Activated B cell treated with CpG ODN at 0.5 μM for 24 hours (primary cell): ENCODE measurements at regions of chr19 and their contacts with region 1.

Region 1: DNA sequence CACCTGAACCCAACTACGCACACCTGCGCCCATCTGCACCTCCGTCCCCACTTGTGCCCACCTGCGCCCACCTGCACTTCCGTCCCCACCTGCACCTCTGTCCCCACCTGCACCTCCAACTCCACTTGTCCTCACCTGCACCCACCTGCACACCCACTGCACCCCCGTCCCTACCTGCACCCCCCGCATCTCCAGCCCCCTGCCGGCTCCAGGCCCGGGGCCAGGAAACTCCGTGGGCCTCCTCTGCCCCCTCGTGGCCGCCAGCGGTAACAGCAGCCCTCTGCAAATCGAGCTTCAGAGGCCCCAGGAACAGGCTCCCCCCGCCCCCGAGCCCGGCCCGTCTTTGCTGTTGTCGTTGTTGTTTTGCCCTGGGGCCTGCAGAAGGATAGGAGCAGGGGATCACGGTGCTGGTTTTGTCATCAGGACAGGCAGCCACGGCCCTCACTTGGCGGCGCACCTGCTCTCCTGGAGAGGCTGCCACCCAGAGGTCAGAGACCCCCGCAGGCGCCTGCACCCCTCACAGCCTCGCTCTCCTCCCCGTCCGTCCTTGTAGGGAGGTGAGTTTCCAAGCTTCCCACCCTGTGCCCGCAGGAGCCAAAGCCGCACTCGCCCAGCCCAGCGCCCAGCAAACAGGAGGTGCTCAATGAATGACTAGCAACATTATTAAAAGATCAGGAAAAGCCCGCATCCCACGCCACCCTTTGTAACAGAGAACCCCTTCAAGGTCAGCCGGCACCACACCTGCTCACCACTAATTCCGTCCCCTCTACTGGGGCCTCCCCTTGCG is 65.4 kb downstream of the GNG7 start:
- DNase-seq: peak; percentile 74
- ATAC-seq: peak; percentile 52
- H3K4me3 Mint-ChIP-seq: peak overlapping the region; percentile 53
- H3K27ac Mint-ChIP-seq: peak overlapping the region; percentile 74
- H3K4me1 Mint-ChIP-seq: peaks cover 87% of the 10 kb centered on the region
- H3K27me3 Mint-ChIP-seq: no peaks in the 10 kb centered on the region
- CTCF ChIP-seq: peak; percentile 31

Region 2: DNA sequence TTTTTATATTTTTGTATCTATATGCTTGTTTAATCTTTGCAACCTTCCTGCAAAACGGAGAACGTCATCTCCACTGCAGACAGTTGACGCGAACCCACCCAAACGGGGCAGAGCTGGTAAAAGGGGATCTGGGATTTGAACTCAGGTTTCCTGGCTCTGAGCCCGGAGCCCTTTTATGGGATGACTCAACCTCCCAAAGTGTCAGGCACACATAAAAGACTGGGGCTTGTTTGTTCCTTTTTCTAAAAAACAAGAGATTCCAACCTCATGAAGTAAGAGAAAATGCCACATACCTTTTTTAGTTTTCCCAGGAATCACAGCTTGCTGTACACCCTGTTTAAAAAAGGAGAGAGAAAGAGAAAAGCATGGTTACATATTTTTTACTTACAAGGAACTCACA is 82.2 kb before region 1 on chr19:
- CTCF ChIA-PET with region 1: no interaction called
- POLR2A ChIA-PET with region 1: no interaction called
- intact Hi-C with region 1: no loop called
- DNase-seq: no peak
- ATAC-seq: no peak
- H3K4me3 Mint-ChIP-seq: no peak overlapping the region
- H3K27ac Mint-ChIP-seq: peak overlapping the region; percentile 35
- H3K4me1 Mint-ChIP-seq: peaks cover 31% of the 10 kb centered on the region
- H3K27me3 Mint-ChIP-seq: no peaks in the 10 kb centered on the region
- CTCF ChIP-seq: no peak

Region 3: DNA sequence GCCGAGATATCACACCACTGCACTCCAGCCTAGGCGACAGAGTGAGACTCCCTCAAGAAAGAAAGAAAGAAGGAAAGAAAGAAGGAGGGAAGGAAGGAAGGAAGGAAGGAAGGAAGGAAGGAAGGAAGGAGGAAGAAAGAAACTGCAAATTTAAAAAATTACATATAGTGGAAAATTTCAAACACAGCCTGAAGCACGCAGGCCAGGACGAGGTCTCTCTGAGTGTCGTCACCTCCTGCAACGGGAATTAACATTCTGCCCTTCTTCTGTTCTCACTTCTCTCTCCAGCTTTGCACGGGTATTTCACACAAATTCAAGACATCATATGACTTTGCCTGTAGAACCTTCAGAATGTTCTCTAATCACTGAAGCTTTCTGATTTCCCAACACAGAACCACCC is 42.8 kb before region 1 on chr19:
- CTCF ChIA-PET with region 1: interaction called, 10 read pairs
- POLR2A ChIA-PET with region 1: interaction called, 4 read pairs
- intact Hi-C with region 1: no loop called
- DNase-seq: no peak
- ATAC-seq: peak; percentile 50
- H3K4me3 Mint-ChIP-seq: peak overlapping the region; percentile 60
- H3K27ac Mint-ChIP-seq: peak overlapping the region; percentile 90
- H3K4me1 Mint-ChIP-seq: peaks cover 57% of the 10 kb centered on the region
- H3K27me3 Mint-ChIP-seq: no peaks in the 10 kb centered on the region
- CTCF ChIP-seq: no peak

Region 4: GRCh38 chr19:2618611-2619010 is 18.5 kb before region 1 on chr19:
- CTCF ChIA-PET with region 1: interaction called, 336 read pairs
- POLR2A ChIA-PET with region 1: interaction called, 582 read pairs
- intact Hi-C with region 1: loop called (anchors 1 kb)
- DNase-seq: peak; percentile 59
- ATAC-seq: peak; percentile 26
- H3K4me3 Mint-ChIP-seq: peak overlapping the region; percentile 70
- H3K27ac Mint-ChIP-seq: peak overlapping the region; percentile 94
- H3K4me1 Mint-ChIP-seq: peaks cover 96% of the 10 kb centered on the region
- H3K27me3 Mint-ChIP-seq: no peaks in the 10 kb centered on the region
- CTCF ChIP-seq: no peak